ENCODE measurements at regions of chr14 and their contacts with region 1.

Region 1: DNA sequence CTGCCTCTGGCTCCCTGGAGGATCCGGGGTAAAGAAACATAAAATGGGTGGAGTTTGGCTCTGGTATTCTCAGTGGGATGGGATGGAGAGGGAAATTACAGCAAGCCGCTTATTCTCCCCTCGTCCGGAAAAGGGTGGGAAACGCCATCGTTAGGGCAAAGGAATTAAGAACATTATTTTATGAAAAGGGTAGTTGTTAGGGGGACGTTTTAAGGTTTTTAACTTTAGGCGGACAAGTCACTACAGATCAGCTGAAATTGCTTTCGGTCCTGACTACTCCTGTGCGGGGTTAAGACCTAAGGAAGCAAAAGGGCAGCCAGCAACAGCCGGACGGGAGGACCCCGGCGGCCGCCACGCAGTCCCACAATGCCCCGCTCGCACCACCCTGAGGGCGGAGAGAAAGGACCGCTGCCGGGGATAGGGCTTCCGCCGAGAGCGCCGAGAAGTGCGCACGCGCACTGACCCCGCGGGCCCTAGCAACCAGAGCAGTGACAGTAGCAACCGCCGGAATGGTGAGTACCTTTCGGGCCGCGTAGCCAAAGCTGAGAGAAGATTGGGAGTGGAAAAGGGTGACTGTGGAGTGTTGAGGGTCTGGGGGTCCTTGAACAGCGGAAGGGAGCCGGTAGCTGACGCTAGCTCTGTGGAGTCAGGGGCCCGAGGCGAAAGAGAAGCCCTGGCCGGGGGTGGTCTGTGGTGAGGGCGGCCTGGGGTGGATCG is at the start of gene DNAL1:
- DNase-seq: peak; percentile 84 to 89 (median 86)
- H3K4me3 ChIP-seq: peak within 1 kb of the TSS; percentile 86 to 97 (median 88)
- H3K27ac ChIP-seq: peak within 1 kb of the TSS; percentile 70 to 92
- H3K4me1 ChIP-seq: peaks cover 7 to 16% (median 9%) of the 10 kb centered on the region in 4 experiments
- H3K27me3 ChIP-seq: no peaks in the 10 kb centered on the region

Region 2: DNA sequence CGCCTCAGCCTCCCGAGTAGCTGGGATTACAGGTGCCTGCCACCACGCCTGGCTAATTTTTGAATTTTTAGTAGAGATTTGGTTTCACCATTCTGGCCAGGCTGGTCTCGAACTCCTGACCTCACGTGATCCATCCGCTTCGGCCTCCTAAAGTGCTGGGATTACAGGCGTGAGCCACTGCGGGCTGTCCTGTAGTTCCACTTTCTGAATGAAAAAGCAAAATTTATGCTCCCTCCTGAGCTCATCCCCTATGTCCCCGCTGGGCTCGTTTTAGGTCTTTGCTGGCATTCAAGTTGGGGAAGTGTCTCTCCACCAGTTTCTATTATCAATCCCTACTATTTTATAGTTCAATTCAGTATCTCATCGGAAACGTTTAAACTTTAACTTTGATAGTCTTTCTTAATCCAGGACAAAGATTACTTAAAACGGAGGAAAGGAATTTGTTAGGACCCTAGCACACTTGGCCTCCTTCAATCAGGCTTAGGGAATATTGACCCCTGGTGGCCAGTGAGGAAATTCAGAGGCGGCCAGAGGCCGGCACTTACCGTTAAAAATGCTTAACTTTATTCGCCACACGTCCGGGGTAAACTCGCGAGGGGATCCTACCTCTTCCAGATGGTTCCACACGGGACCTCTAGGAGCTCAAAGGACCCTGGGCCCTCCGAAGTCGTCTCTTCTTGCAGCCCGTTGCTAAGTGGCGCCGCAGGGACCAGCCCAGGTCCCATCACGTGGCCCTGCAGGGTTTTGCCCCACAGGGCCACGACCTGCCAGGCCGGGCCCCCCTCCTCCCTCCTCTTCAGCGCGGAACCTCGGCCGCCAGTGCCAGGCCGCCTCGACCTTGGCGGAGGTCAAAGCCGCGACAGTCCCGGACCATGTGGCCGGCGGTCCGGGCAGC is 11.3 kb before region 1 on chr14:
- CTCF ChIA-PET with region 1: interaction called, 20 read pairs
- POLR2A ChIA-PET with region 1: no interaction called
- DNase-seq: peak; percentile 80 to 84 (median 82)
- H3K4me3 ChIP-seq: peak overlapping the region; percentile 27 to 80 (median 68)
- H3K27ac ChIP-seq: no peak overlapping the region
- H3K4me1 ChIP-seq: peaks cover 0 to 18% (median 9%) of the 10 kb centered on the region in 4 experiments
- H3K27me3 ChIP-seq: peaks cover 0 to 3% (median 0%) of the 10 kb centered on the region in 5 experiments